Sciatic nerve (tissue), 2 donors: ENCODE measurements at regions of chr11 and their contacts with region 1.

Region 1: DNA sequence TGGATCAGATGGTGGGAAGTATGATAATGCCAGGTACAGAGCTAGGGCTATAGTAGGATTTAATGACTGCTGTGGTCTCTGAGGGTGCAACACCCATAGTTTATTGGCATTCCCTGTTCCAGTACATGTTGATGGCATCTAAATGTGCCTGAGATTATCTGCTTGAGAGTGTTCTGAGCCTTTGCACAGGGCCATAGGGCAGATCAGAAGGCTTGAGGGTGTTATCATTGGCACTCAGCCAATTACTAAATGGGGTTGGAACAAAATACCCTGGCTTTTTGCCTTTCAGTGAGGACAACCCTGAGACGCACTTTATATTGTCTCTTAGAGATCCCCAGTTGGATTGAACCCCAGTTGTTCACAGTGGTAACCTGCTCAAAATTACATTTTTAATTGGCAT is 6.7 kb downstream of the SLC5A12 start:
- DNase-seq: no peak
- ATAC-seq: no peak

Region 2: GRCh38 chr11:26483108-26483507 is 232.0 kb before region 1 on chr11:
- intact Hi-C with region 1: no loop called
- DNase-seq: no peak
- ATAC-seq: no peak

Region 3: GRCh38 chr11:26806219-26806618 is 91.1 kb after region 1 on chr11:
- intact Hi-C with region 1: loop called (anchors 5 kb)
- DNase-seq: no peak
- ATAC-seq: no peak